CD8-positive, alpha-beta T cell (primary cell): ENCODE measurements at regions of chr5 and their contacts with region 1.

Region 1: GRCh38 chr5:12023614-12024241 is 119.5 kb upstream of the CTNND2 start:
- DNase-seq: peak in 1 of 9 experiments; percentile 3
- ATAC-seq: no peak
- H3K4me3 ChIP-seq: no peak overlapping the region
- H3K4me3 Mint-ChIP-seq: no peak overlapping the region
- H3K27ac ChIP-seq: no peak overlapping the region
- H3K27ac Mint-ChIP-seq: no peak overlapping the region
- H3K4me1 ChIP-seq: no peaks in the 10 kb centered on the region
- H3K4me1 Mint-ChIP-seq: no peaks in the 10 kb centered on the region
- H3K27me3 ChIP-seq: no peaks in the 10 kb centered on the region
- H3K27me3 Mint-ChIP-seq: no peaks in the 10 kb centered on the region
- CTCF ChIP-seq: peak; percentile 15

Region 2: GRCh38 chr5:10987930-10988504 is 1035.7 kb before region 1 on chr5:
- CTCF ChIA-PET with region 1: no interaction called
- POLR2A ChIA-PET with region 1: no interaction called
- intact Hi-C with region 1: loop called in 1 of 2 experiments (anchors 10 kb)
- DNase-seq: peak; percentile 14 to 66 (median 52)
- ATAC-seq: peak; percentile 69
- H3K4me3 ChIP-seq: no peak overlapping the region
- H3K4me3 Mint-ChIP-seq: peak overlapping the region; percentile 62
- H3K27ac ChIP-seq: no peak overlapping the region
- H3K27ac Mint-ChIP-seq: no peak overlapping the region
- H3K4me1 ChIP-seq: peaks cover 7% of the 10 kb centered on the region
- H3K4me1 Mint-ChIP-seq: peaks cover 11% of the 10 kb centered on the region
- H3K27me3 ChIP-seq: peaks cover 0 to 8% of the 10 kb centered on the region in 2 experiments
- H3K27me3 Mint-ChIP-seq: peaks cover 21% of the 10 kb centered on the region
- CTCF ChIP-seq: peak; percentile 41

Region 3: GRCh38 chr5:13660072-13660471 is 1636.3 kb after region 1 on chr5:
- CTCF ChIA-PET with region 1: no interaction called
- POLR2A ChIA-PET with region 1: no interaction called
- intact Hi-C with region 1: no loop called
- DNase-seq: no peak
- ATAC-seq: no peak
- H3K4me3 ChIP-seq: no peak overlapping the region
- H3K4me3 Mint-ChIP-seq: no peak overlapping the region
- H3K27ac ChIP-seq: no peak overlapping the region
- H3K27ac Mint-ChIP-seq: no peak overlapping the region
- H3K4me1 ChIP-seq: no peaks in the 10 kb centered on the region
- H3K4me1 Mint-ChIP-seq: no peaks in the 10 kb centered on the region
- H3K27me3 ChIP-seq: no peaks in the 10 kb centered on the region
- H3K27me3 Mint-ChIP-seq: no peaks in the 10 kb centered on the region
- CTCF ChIP-seq: no peak